ENCODE measurements at regions of chr10 and their contacts with region 1.

Region 1: GRCh38 chr10:80382989-80383388 is 25.4 kb upstream of the PRXL2A start:
- DNase-seq: peak; percentile 70
- H3K4me3 ChIP-seq: no peak overlapping the region
- H3K27ac ChIP-seq: no peak overlapping the region
- H3K4me1 ChIP-seq: no peaks in the 10 kb centered on the region
- H3K27me3 ChIP-seq: no peaks in the 10 kb centered on the region
- CTCF ChIP-seq: peak; percentile 58 to 63
- POLR2A ChIP-seq: no peak

Region 2: GRCh38 chr10:80177781-80178540 is 205.0 kb before region 1 on chr10:
- CTCF ChIA-PET with region 1: no interaction called
- POLR2A ChIA-PET with region 1: no interaction called
- dilution Hi-C with region 1: no loop called
- intact Hi-C with region 1: no loop called
- DNase-seq: no peak
- H3K4me3 ChIP-seq: no peak overlapping the region
- H3K27ac ChIP-seq: no peak overlapping the region
- H3K4me1 ChIP-seq: no peaks in the 10 kb centered on the region
- H3K27me3 ChIP-seq: no peaks in the 10 kb centered on the region
- CTCF ChIP-seq: no peak
- POLR2A ChIP-seq: no peak

Region 3: DNA sequence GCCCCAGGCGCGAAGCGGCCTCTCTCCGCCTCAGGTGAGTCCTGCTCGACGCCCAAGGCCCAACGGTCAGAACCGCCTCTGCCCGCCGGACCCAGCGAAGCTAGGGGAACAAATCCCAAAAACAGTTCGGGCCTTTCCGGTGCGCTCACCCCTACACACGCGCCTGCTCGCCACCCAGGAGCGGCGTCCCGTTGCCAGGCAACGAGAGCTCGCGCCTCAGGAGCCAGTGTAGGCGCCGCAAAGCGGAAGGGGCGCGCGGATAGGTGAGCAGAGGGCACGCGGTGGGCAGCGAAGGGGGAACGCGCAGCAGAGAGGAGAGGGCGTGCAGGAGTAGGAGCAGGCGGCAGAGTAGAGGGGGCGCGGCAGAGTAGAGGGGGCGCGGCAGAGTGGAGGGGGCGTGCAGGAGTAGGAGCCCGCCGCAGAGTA is 26.4 kb before region 1 on chr10 and contains the starts of genes DYDC1 and DYDC2:
- CTCF ChIA-PET with region 1: interaction called, 15 read pairs
- POLR2A ChIA-PET with region 1: no interaction called
- dilution Hi-C with region 1: no loop called
- intact Hi-C with region 1: no loop called
- DNase-seq: no peak
- H3K4me3 ChIP-seq: peak within 1 kb of the TSS in 1 of 3 experiments; percentile 20
- H3K27ac ChIP-seq: no peak within 1 kb of the TSS
- H3K4me1 ChIP-seq: peaks cover 3% of the 10 kb centered on the region
- H3K27me3 ChIP-seq: peaks cover 29 to 32% of the 10 kb centered on the region in 2 experiments
- CTCF ChIP-seq: no peak
- POLR2A ChIP-seq: no peak
- total RNA-seq, gene DYDC1: not detected in 2 replicates
- total RNA-seq, gene DYDC2: not detected in 2 replicates

Region 4: DNA sequence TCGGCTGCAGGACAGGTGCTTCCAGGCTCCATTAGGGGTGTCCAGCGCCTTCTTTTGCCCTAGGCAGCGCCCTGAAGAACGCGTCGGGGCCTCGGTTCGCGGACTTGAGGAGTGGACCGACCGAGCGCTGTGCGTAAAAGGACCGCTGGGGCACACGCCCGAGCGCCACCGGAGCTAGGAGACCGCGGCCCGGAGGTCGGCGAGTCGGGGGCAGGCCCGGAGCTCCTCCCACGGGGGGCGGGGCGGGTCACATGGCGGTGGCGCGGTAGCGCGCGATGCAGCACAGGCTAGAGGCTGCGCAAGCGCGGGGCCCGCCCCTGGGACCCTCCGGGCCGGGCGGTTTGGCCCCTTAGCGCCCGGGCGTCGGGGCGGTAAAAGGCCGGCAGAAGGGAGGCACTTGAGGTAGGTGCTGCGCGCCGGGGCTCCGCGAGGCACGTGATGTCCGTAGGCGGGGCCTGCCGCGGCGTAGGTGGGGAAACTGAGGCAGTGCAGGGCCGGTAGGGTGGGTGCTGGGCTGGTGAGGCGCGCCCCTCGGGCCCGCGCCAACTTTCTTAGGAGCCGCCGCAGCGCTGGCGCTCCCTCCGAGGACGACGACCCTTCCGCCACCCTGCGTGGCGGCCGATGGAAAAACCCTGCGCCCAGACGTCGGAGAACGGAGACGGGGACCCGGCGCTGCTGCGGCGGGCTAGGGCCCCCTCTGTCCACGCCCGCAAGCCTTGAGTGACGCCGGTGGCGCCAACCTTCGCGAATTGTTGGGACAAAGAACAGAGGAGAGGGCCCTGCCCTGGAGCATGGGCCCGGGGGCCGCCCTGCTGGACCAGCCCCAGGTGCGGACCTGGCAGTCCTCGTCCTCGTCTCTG is 25.5 kb after region 1 on chr10 and contains the start of gene PRXL2A:
- CTCF ChIA-PET with region 1: interaction called, 21 read pairs
- POLR2A ChIA-PET with region 1: interaction called, 4 read pairs
- dilution Hi-C with region 1: no loop called
- intact Hi-C with region 1: loop called (anchors 1 kb)
- DNase-seq: peak; percentile 90
- H3K4me3 ChIP-seq: peak within 1 kb of the TSS; percentile 81 to 89 (median 87)
- H3K27ac ChIP-seq: peak within 1 kb of the TSS; percentile 93
- H3K4me1 ChIP-seq: peaks cover 42% of the 10 kb centered on the region
- H3K27me3 ChIP-seq: no peaks in the 10 kb centered on the region
- CTCF ChIP-seq: peak in 1 of 2 donors; percentile 4
- POLR2A ChIP-seq: peak; percentile 90
- total RNA-seq, gene PRXL2A: 290 and 321 TPM in 2 replicates

Region 5: DNA sequence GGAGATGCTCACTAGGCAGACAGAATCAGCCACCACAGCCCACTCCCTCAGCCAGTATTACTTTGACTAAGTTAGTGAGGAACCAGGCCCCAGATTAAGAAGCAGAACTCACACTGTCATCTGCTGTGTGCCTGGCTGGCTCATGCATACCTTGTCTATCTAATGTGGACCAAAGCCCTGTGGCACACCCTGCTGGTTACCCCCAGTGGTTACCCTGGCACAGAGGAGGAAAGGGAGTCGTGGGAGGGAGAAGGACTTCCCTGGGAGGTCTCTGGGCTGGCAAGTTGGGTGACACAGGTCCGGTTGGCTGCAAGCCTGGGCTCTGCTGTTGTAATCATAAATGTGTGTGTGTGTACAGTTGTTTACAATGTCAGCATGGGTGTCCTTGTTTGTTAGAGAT is 147.3 kb after region 1 on chr10:
- CTCF ChIA-PET with region 1: interaction called, 4 read pairs
- POLR2A ChIA-PET with region 1: no interaction called
- dilution Hi-C with region 1: no loop called
- intact Hi-C with region 1: loop called (anchors 1 kb)
- DNase-seq: no peak
- H3K4me3 ChIP-seq: no peak overlapping the region
- H3K27ac ChIP-seq: no peak overlapping the region
- H3K4me1 ChIP-seq: no peaks in the 10 kb centered on the region
- H3K27me3 ChIP-seq: no peaks in the 10 kb centered on the region
- CTCF ChIP-seq: peak in 1 of 2 donors; percentile 38
- POLR2A ChIP-seq: no peak

Region 6: DNA sequence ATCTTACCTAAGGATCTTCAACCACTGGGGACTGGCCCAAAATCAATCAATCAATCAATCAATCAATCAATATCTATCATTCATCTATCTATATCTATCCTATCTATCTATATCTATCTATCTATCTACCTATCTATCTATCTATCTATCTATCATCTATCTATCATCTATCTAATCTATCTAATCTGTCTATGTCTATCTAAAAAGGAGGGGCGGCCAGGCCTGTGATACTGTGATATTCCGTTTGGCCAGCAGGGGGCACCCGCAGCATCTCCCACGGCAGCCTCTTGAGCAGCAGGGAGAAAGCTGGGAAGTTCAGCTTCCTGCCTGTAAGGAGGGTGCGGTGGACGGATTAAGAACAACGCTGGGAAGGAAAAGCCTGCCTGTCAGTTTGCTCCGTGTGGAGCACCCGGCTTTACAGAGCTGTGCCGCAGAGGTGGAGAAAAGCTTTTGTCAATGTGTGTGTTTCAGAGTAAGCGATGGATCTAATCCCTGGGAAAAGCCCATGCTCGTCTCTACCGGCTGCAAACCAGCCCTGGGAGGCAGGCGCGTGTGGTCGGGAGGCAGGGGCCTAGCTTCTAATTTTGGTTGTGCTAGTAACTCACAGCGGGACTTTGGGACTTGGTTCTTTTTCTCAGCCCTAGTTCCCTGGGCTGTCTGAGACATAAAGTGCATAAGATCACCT is 279.7 kb after region 1 on chr10:
- CTCF ChIA-PET with region 1: interaction called, 16 read pairs
- POLR2A ChIA-PET with region 1: no interaction called
- dilution Hi-C with region 1: no loop called
- intact Hi-C with region 1: loop called (anchors 1 kb)
- DNase-seq: peak; percentile 84
- H3K4me3 ChIP-seq: peak overlapping the region in 1 of 3 experiments; percentile 4
- H3K27ac ChIP-seq: no peak overlapping the region
- H3K4me1 ChIP-seq: peaks cover 4% of the 10 kb centered on the region
- H3K27me3 ChIP-seq: peaks cover 0 to 2% of the 10 kb centered on the region in 2 experiments
- CTCF ChIP-seq: peak; percentile 79 to 81
- POLR2A ChIP-seq: no peak

Region 7: GRCh38 chr10:80878330-80878729 is 495.3 kb after region 1 on chr10:
- CTCF ChIA-PET with region 1: no interaction called
- POLR2A ChIA-PET with region 1: no interaction called
- dilution Hi-C with region 1: no loop called
- intact Hi-C with region 1: no loop called
- DNase-seq: no peak
- H3K4me3 ChIP-seq: no peak overlapping the region
- H3K27ac ChIP-seq: no peak overlapping the region
- H3K4me1 ChIP-seq: no peaks in the 10 kb centered on the region
- H3K27me3 ChIP-seq: no peaks in the 10 kb centered on the region
- CTCF ChIP-seq: no peak
- POLR2A ChIP-seq: no peak

Region 8: GRCh38 chr10:80946957-80947726 is 564.2 kb after region 1 on chr10:
- CTCF ChIA-PET with region 1: no interaction called
- POLR2A ChIA-PET with region 1: no interaction called
- dilution Hi-C with region 1: no loop called
- intact Hi-C with region 1: no loop called
- DNase-seq: no peak
- H3K4me3 ChIP-seq: no peak overlapping the region
- H3K27ac ChIP-seq: no peak overlapping the region
- H3K4me1 ChIP-seq: no peaks in the 10 kb centered on the region
- H3K27me3 ChIP-seq: no peaks in the 10 kb centered on the region
- CTCF ChIP-seq: no peak
- POLR2A ChIP-seq: no peak